HEK293 (cell line): ENCODE measurements at regions of chrX and their contacts with region 1.

Region 1: DNA sequence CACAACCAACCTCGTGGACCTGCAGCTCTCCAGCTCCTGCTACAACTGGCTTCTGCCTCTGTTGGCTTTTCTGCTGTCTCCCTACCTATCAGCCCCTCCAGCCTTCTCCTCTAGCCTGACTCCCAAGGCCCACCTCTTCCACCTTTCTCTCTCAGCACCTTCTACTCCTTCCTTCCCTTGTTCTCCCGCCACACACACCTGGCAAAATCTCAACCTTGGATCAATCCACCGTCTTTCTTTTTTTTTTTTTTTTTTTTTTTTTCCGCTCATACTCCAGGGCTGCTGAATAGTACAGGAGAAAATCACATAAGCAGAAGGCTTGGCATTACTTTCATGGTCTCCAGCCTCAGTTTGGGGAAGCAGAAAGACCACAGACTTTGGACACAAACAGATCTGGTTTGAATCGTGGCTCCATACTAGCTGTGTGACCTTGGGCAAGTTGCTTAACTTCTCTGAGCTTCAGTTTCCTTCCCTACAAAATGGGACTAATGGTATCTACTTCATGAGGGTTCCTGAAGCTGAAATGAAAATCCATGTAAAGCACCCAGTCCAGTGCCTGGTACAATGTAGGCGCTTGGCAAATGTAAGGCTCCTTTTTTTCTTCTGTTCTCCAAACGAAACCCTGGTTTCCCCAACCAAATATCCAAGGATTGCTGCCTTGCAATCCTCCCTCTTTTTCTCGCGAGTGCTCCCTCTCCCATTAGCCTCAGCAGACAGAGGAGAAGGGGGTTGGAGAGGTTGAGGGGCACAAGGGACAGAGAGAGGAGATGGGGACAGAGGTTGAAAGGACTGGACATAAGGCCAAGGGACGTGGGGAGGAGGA is 1.7 kb downstream of the FGD1 start:
- H3K4me3 ChIP-seq: peak overlapping the region; percentile 63
- H3K27ac ChIP-seq: peak overlapping the region; percentile 62; the same call in 1 of the 2 replicates
- H3K4me1 ChIP-seq: peaks cover 5% of the 10 kb centered on the region
- CTCF ChIP-seq: no peak

Region 2: DNA sequence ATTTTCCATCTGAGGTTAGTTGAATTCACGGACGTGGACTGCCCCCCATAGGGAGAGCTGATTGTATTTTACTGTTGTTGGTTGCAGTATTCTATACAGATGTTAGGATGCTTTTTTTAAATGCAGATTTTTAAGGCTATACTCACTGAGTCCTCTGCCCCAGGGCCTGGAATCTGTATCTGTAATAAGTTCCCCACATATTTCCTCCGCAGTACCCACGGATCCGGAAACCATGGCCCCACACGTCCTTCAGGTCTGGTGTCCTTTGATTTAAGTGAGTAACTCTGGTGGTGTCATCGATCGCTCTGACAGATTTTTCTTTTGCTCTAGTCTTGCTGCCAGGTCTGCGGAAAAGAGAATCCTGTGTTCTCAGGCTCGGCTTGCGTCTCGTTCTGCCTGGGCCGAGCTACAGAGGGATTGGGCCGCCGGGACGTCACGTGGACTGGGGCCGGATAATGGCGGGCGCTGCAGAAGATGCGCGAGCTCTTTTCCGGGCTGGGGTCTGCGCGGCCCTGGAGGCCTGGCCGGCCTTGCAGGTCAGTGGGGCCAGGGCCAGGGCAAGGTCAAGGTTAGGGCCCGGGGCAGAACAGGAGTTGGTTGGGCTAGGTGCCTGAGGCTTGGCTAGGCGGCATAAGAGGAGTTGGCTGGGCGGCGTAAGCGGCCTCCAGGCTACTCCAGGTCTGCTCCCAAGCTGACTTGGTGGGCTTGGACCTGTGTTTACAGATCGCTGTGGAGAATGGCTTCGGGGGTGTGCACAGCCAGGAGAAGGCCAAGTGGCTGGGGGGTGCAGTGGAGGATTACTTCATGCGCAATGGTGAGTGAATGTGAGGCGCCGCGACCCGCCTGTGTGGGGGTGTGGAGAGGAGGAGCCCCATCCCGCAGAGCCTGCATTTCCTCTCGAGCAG is 54.2 kb before region 1 on chrX and contains the start of gene TSR2:
- CTCF ChIA-PET with region 1: no interaction called
- POLR2A ChIA-PET with region 1: interaction called, 10 read pairs
- H3K4me3 ChIP-seq: peak within 1 kb of the TSS; percentile 60
- H3K27ac ChIP-seq: peak within 1 kb of the TSS; percentile 42; the same call in 1 of the 2 replicates
- H3K4me1 ChIP-seq: no peaks in the 10 kb centered on the region
- CTCF ChIP-seq: no peak

Region 3: GRCh38 chrX:54551801-54552200 is 57.4 kb after region 1 on chrX:
- CTCF ChIA-PET with region 1: no interaction called
- POLR2A ChIA-PET with region 1: no interaction called
- H3K4me3 ChIP-seq: no peak overlapping the region
- H3K27ac ChIP-seq: no peak overlapping the region
- H3K4me1 ChIP-seq: no peaks in the 10 kb centered on the region
- CTCF ChIP-seq: no peak